ENCODE measurements at regions of chr12 and their contacts with region 1.

Region 1: GRCh38 chr12:128069359-128069997 is 197.5 kb upstream of the TMEM132C start:
- DNase-seq: peak; percentile 19
- ATAC-seq: no peak
- H3K4me3 Mint-ChIP-seq: no peak overlapping the region
- H3K27ac Mint-ChIP-seq: no peak overlapping the region
- H3K4me1 Mint-ChIP-seq: no peaks in the 10 kb centered on the region
- H3K27me3 Mint-ChIP-seq: peaks cover 15% of the 10 kb centered on the region
- CTCF ChIP-seq: peak; percentile 51

Region 2: GRCh38 chr12:126967152-126967551 is 1102.3 kb before region 1 on chr12:
- CTCF ChIA-PET with region 1: no interaction called
- POLR2A ChIA-PET with region 1: interaction called, 10 read pairs
- DNase-seq: no peak
- ATAC-seq: no peak
- H3K4me3 Mint-ChIP-seq: no peak overlapping the region
- H3K27ac Mint-ChIP-seq: no peak overlapping the region
- H3K4me1 Mint-ChIP-seq: no peaks in the 10 kb centered on the region
- H3K27me3 Mint-ChIP-seq: peaks cover 6% of the 10 kb centered on the region; the same call in 1 of the 2 replicates
- CTCF ChIP-seq: no peak

Region 3: DNA sequence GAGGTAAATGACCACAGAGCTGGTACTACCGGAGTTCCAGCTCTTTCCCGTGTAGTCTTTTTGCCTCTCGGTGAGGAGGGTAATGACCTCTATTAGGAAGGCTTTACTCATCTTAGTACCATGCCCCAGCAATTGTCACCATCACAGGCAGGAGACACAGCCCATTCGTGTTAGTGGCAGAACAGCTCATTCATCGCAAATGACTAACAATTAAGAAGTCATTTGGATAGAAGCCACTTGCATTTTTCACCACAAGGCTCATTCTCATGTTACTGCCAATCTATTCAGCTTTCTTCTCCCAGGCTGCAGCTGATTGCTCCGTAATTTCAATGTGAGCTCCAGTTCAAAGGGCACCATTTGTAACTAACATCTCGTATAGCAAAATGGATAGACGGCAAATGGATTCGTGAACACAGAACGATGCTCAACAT is 521.3 kb before region 1 on chr12:
- CTCF ChIA-PET with region 1: no interaction called
- POLR2A ChIA-PET with region 1: no interaction called
- DNase-seq: no peak
- ATAC-seq: no peak
- H3K4me3 Mint-ChIP-seq: no peak overlapping the region
- H3K27ac Mint-ChIP-seq: no peak overlapping the region
- H3K4me1 Mint-ChIP-seq: peaks cover 10% of the 10 kb centered on the region
- H3K27me3 Mint-ChIP-seq: peaks cover 8% of the 10 kb centered on the region
- CTCF ChIP-seq: no peak

Region 4: GRCh38 chr12:128083132-128083729 is 13.8 kb after region 1 on chr12:
- CTCF ChIA-PET with region 1: no interaction called
- POLR2A ChIA-PET with region 1: no interaction called
- DNase-seq: no peak
- ATAC-seq: no peak
- H3K4me3 Mint-ChIP-seq: no peak overlapping the region
- H3K27ac Mint-ChIP-seq: no peak overlapping the region
- H3K4me1 Mint-ChIP-seq: no peaks in the 10 kb centered on the region
- H3K27me3 Mint-ChIP-seq: peaks cover 12% of the 10 kb centered on the region
- CTCF ChIP-seq: no peak

Region 5: GRCh38 chr12:128098730-128099129 is 29.3 kb after region 1 on chr12:
- CTCF ChIA-PET with region 1: no interaction called
- POLR2A ChIA-PET with region 1: no interaction called
- DNase-seq: no peak
- ATAC-seq: no peak
- H3K4me3 Mint-ChIP-seq: no peak overlapping the region
- H3K27ac Mint-ChIP-seq: no peak overlapping the region
- H3K4me1 Mint-ChIP-seq: no peaks in the 10 kb centered on the region
- H3K27me3 Mint-ChIP-seq: peaks cover 6% of the 10 kb centered on the region; the same call in 1 of the 2 replicates
- CTCF ChIP-seq: no peak